K562 (cell line): ENCODE measurements at regions of chr2 and their contacts with region 1.

Region 1: DNA sequence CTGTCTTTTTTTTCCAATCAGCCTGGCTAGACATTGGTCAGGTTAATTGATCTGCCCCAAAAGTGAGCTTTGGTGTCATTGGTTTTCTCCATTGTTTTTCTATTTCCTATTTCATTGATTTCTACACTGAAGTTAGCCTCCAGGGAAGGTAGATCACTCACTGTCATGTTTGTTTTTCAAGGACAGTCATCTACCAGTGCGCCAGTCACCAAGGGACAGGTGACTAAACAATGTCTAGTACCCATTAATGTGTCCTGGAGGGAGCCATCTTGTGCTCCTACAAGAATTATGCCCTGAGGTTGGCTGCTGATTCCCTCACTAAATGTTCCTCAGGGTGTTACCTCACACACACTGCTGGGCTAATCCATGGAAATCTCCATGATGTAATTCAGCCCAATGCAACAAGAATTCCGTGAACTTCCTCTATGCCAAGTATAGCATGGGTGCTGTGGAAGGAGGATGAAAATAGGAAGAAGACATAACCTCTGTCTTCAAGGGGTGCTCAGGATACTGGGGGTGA is 17.7 kb upstream of the USP40 start:
- DNase-seq: no peak
- ATAC-seq: no peak
- H3K4me3 ChIP-seq: no peak overlapping the region
- H3K27ac ChIP-seq: no peak overlapping the region
- H3K4me1 ChIP-seq: no peaks in the 10 kb centered on the region
- H3K27me3 ChIP-seq: no peaks in the 10 kb centered on the region
- CTCF ChIP-seq: no peak
- EP300 ChIP-seq: no peak
- POLR2A ChIP-seq: no peak
- RAD21 ChIP-seq: no peak

Region 2: GRCh38 chr2:233627331-233628025 is 43.2 kb after region 1 on chr2:
- CTCF ChIA-PET with region 1: no interaction called
- POLR2A ChIA-PET with region 1: no interaction called
- in situ Hi-C with region 1: no loop called
- intact Hi-C with region 1: no loop called
- DNase-seq: no peak
- ATAC-seq: no peak
- H3K4me3 ChIP-seq: no peak overlapping the region
- H3K27ac ChIP-seq: no peak overlapping the region
- H3K4me1 ChIP-seq: no peaks in the 10 kb centered on the region
- H3K27me3 ChIP-seq: no peaks in the 10 kb centered on the region
- CTCF ChIP-seq: no peak
- EP300 ChIP-seq: no peak
- POLR2A ChIP-seq: no peak
- RAD21 ChIP-seq: no peak

Region 3: DNA sequence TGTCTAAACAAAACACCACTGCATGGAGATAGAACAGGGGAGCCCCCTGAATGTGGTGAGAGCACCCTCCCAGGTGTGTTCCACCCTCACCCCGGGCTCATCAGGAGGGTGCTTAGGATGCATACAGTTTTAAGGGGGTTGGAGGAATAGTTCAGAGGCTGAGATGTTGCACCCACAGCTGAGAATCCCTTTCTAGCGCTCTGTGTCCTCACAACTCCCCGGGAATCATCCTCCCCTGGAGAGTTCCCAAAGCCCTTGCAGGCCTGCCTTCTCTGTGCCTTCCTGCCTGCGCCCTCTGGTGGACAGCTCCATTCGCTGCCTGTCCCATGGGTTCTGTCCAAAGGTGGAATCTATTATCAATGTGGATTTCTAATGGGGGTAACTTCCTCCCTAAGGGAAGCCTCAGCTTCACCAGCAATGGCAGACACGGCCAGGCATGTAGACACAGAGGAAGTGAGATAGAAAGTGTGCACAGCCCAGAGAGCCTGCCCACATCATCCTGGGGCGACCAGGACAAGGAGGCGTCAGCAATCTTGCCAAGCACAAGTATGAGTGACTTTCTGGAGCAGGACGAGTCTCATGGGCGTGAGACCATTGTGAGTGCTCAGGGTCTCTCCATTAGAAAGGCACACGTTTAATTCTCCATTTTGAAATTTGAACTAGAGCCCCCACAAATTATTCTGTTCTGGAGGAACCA is 127.2 kb after region 1 on chr2:
- CTCF ChIA-PET with region 1: no interaction called
- POLR2A ChIA-PET with region 1: no interaction called
- in situ Hi-C with region 1: no loop called
- intact Hi-C with region 1: loop called (anchors 10 kb)
- DNase-seq: peak; percentile 30 to 68 (median 37)
- ATAC-seq: peak; percentile 93
- H3K4me3 ChIP-seq: no peak overlapping the region
- H3K27ac ChIP-seq: no peak overlapping the region
- H3K4me1 ChIP-seq: 0 out of 5 replicates have a peak, but pooled peaks cover 0 to 3% of the 10 kb centered on the region in 2 experiments
- H3K27me3 ChIP-seq: peaks cover 0 to 10% of the 10 kb centered on the region in 2 experiments; a peak in 3 of 5 replicates
- CTCF ChIP-seq: peak; percentile 73 to 76 (median 73)
- EP300 ChIP-seq: no peak
- POLR2A ChIP-seq: no peak
- RAD21 ChIP-seq: peak; percentile 72 to 76